Prostate gland (tissue), 2 donors: ENCODE measurements at regions of chr3 and their contacts with region 1.

Region 1: DNA sequence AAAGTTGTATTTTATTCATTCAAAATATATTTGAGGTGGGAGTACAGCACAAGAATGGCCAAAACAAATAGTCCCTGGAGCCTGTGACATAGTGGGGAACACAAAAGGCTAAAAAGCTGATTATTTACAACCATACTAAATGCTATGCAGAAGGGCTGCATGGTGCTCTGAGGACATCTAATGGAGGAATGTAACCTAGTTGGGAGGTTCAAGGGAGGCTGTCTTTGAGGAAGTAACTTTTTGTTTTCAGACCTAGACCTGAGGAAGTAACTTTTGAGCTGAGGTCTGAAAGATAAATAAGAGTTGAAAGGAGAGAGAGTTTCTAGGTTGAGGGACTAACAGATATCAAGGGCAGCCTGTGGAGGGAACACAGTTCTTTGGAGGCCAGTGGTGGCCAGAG is 34.8 kb upstream of the RASA2 start:
- DNase-seq: no peak
- H3K4me3 ChIP-seq: no peak overlapping the region
- H3K27ac ChIP-seq: peak overlapping the region; percentile 68 to 69
- H3K4me1 ChIP-seq: peaks cover 13% of the 10 kb centered on the region
- H3K27me3 ChIP-seq: no peaks in the 10 kb centered on the region
- CTCF ChIP-seq: peak in 3 of 4 experiments; percentile 64 to 83 (median 68)
- POLR2A ChIP-seq: no peak

Region 2: DNA sequence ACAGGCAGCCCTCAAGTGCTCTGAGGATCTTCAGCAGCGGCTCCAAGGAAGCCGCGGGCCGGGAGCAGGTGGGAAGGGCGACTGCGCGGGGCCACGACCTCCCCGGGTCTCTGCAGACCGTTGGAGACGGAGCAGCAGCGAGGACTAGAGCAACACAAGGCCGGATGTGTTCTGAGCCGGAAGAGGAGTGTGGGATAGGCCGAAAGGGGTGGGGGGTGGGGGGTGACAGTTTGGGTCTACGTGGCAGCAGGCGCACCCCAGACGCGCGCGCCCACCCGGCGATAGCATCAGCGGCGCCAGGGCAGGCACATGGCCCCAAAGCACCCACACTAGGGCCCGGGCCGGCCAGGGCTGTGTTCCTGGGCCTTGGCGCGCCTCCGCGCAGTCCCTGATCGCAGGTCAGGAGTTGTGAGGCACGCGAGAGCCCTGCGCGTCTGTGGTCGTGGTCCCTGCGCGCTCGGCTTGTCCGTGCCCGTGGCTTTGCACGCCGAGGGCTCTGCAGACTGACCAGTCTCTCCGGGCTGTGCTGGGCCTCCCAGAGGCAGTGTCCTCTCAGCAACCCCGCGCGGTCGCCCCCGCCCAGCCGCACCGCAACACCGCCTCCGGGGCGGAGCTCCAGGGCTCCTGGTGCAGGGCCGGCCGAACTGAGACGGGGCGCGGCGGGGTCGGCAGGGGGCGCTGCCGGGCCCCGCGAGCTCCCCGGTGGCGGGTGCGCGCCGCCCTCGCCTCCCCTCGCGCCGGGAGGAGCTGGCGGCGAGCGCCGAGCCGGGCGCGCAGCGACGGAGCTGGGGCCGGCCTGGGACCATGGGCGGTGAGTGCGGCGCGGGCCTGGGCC is 220.7 kb before region 1 on chr3 and contains the start of gene PXYLP1:
- intact Hi-C with region 1: loop called (anchors 5 kb)
- DNase-seq: peak; percentile 89
- H3K4me3 ChIP-seq: peak within 1 kb of the TSS; percentile 59 to 72
- H3K27ac ChIP-seq: peak within 1 kb of the TSS; percentile 81 to 87
- H3K4me1 ChIP-seq: no peaks in the 10 kb centered on the region
- H3K27me3 ChIP-seq: no peaks in the 10 kb centered on the region
- CTCF ChIP-seq: peak; percentile 58 to 95 (median 81)
- POLR2A ChIP-seq: peak; percentile 75
- total RNA-seq, gene PXYLP1: 12.0 to 15.3 TPM

Region 3: GRCh38 chr3:141303481-141304223 is 148.4 kb before region 1 on chr3:
- intact Hi-C with region 1: loop called (anchors 2 kb)
- DNase-seq: peak; percentile 72
- H3K4me3 ChIP-seq: no peak overlapping the region
- H3K27ac ChIP-seq: no peak overlapping the region
- H3K4me1 ChIP-seq: no peaks in the 10 kb centered on the region
- H3K27me3 ChIP-seq: no peaks in the 10 kb centered on the region
- CTCF ChIP-seq: peak; percentile 85 to 94 (median 87)
- POLR2A ChIP-seq: no peak

Region 4: DNA sequence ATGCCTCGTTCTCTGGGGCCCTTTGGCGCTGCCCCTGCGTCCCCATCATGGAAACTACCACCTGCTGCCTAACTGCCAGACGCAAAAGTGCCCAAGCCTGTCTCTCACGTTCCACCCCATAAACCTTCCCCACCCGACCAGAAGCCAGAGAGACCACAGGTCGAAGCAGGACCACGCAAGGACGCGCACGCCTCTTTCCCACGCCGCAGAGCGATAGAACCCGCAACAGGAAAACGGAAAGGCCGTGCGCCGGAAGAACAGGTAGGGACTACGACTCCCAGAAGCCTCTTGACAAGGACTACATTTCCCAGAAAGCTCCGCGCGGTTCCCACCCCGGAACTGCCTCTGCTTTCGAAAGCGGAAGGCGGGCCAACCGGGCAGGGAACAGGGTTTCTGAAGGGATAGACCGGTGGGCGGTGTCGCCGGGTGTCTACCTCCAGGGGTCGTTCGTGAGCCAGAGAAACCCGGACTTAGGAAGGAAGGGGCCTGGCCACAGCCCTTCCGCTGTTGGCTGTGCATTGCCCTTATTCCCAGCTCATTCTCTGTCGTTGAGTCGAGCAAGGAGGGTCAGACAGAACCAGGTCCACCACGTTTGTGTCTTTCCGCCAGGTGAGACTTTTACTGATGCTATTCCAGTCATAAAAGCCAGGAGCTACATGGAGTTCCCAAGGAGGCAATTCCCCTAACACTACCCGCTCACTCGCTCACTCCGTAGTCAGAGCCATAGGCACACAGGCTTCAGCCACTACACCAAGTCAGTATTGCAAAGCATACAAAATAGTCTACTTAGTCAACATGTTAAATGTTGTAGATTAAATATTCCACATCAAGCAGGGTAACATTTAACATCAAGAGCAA is 140.3 kb before region 1 on chr3:
- intact Hi-C with region 1: loop called (anchors 2 kb)
- DNase-seq: peak; percentile 98
- H3K4me3 ChIP-seq: peak overlapping the region; percentile 49 to 72
- H3K27ac ChIP-seq: peak overlapping the region; percentile 63 to 80
- H3K4me1 ChIP-seq: no peaks in the 10 kb centered on the region
- H3K27me3 ChIP-seq: no peaks in the 10 kb centered on the region
- CTCF ChIP-seq: peak; percentile 28 to 90 (median 77)
- POLR2A ChIP-seq: peak; percentile 67

Region 5: DNA sequence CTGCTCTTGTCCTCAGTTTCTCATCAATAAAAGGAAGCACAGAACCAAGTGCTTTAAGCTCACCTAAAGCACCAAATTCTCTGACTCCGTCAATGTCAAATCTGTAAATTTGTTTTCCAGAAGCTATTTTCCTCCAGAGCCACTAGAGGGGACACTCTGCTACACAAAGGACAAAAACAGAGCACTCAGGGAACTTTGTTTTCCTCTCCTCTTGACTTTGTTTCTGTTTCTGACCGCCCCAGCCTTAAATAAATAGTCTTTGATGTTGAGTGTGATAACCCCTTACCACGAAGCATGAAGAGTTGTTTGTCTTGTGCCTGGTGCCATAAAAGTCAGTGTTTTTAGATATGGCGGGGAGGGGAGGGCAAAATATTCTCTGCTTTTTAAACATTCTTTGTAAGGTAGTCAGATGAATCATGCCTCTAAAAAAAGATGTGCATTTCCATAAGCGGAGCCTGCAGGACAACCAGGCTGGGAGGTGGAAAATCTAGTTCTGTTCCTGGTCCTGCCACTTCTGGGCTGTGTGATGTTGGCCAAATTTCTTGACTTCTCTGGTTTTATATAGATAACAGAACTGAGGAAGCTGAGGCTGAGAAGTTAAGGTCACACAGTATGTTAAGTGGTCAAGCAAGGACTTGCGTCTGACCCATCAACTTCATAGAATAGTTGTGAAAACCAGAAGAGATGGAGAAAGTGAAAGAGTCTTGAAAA is 91.0 kb before region 1 on chr3:
- intact Hi-C with region 1: loop called (anchors 2 kb)
- DNase-seq: peak; percentile 39
- H3K4me3 ChIP-seq: no peak overlapping the region
- H3K27ac ChIP-seq: peak overlapping the region; percentile 58 to 59
- H3K4me1 ChIP-seq: peaks cover 5% of the 10 kb centered on the region
- H3K27me3 ChIP-seq: no peaks in the 10 kb centered on the region
- CTCF ChIP-seq: peak; percentile 47 to 93 (median 82)
- POLR2A ChIP-seq: no peak

Region 6: GRCh38 chr3:141979050-141979671 is 527.1 kb after region 1 on chr3:
- intact Hi-C with region 1: no loop called
- DNase-seq: no peak
- H3K4me3 ChIP-seq: no peak overlapping the region
- H3K27ac ChIP-seq: no peak overlapping the region
- H3K4me1 ChIP-seq: no peaks in the 10 kb centered on the region
- H3K27me3 ChIP-seq: no peaks in the 10 kb centered on the region
- CTCF ChIP-seq: no peak
- POLR2A ChIP-seq: no peak